ENCODE measurements at regions of chr4 and their contacts with region 1.

Region 1: DNA sequence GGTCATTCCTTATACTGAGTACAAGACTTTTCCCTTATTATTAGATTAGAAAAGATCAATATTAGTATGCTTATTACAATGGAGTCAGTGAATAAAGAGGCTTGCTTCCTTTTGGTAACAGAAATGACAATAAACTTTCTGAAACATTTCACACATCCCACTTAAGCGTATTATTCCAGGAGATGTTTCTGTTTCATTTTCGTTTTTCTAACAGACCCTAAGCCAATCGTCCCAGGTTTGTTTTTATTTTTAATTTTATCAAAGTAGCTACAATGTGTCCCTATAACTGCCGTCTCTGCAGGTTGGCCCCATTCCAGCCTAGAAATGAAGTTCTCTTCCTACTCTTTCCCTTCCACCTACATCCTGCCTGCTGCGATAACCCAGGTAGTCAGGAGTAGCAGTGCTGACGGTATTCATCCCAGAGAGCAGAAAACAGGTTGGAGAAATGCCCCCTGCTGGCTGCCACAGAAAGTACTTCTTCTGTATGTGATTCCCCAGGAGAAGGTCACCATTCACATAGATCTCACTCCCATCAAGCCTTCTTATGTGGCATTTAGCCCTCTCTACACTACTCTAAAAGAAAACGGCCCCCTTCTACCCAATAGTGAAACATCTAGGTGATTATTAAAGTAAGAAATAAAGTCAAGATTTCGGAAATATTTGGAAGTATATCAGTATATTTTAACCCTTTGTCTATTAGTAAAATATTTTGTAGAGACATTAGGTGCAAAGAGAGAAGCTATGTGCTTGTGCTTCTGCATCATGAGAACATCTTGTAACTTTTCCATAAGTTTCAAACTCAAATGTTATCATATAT is 40.4 kb downstream of the ENPEP start:
- DNase-seq: peak; percentile 37
- H3K4me3 ChIP-seq: peak overlapping the region; percentile 54 to 55
- H3K27ac ChIP-seq: no peak overlapping the region
- H3K4me1 ChIP-seq: peaks cover 0 to 2% of the 10 kb centered on the region in 2 experiments; a peak in 2 of 4 replicates
- H3K27me3 ChIP-seq: peaks cover 4% of the 10 kb centered on the region; the same call in 1 of the 2 replicates
- CTCF ChIP-seq: peak; percentile 78
- EP300 ChIP-seq: no peak
- RAD21 ChIP-seq: peak; percentile 63

Region 2: DNA sequence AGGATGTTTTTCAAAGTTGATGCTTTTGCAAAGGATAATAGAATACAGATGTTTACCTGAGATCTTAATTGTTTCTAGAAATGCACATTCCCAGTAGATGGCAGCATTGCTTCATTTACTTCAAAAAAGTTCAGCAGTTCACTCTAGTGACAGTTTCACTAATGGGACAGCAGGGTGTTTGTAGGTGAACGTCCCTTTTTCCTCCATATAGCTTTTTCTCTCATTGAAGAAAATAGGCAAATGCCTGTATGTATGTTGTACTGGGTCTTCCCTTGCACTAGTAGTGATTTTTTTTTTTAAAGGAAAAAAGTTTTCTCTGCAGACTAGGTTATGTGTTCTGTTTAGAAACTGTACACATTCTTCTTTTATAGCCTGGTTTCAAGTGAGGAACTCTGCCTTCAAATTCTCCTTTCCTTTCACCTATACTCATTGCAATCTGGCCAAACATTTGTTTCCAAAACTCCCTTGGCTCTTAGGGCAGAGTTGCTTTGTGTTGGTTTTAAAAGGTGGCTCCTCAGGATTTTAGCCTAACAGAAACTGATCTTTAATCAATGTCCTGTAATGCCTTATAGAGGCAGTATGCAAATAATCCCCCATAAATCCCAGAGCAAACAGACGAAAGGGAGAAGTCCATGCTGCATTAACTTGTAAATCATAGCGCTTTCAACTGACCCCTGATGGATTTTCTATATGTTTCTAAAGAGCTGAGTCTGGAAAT is 517.3 kb before region 1 on chr4:
- CTCF ChIA-PET with region 1: interaction called, 591 read pairs
- POLR2A ChIA-PET with region 1: no interaction called
- DNase-seq: peak; percentile 55
- H3K4me3 ChIP-seq: no peak overlapping the region
- H3K27ac ChIP-seq: no peak overlapping the region
- H3K4me1 ChIP-seq: no peaks in the 10 kb centered on the region; a peak in 1 of 4 replicates
- H3K27me3 ChIP-seq: no peaks in the 10 kb centered on the region; the same call in 1 of the 2 replicates
- CTCF ChIP-seq: peak; percentile 82
- EP300 ChIP-seq: no peak
- RAD21 ChIP-seq: peak; percentile 90

Region 3: GRCh38 chr4:110344162-110344561 is 172.2 kb before region 1 on chr4:
- CTCF ChIA-PET with region 1: interaction called, 11 read pairs
- POLR2A ChIA-PET with region 1: no interaction called
- DNase-seq: peak; percentile 4
- H3K4me3 ChIP-seq: no peak overlapping the region
- H3K27ac ChIP-seq: no peak overlapping the region
- H3K4me1 ChIP-seq: no peaks in the 10 kb centered on the region; a peak in 1 of 4 replicates
- H3K27me3 ChIP-seq: 0 out of 2 replicates have a peak, but pooled peaks cover under 1% of the 10 kb centered on the region
- CTCF ChIP-seq: peak; percentile 41
- EP300 ChIP-seq: no peak
- RAD21 ChIP-seq: peak; percentile 55

Region 4: GRCh38 chr4:110442156-110442703 is 74.1 kb before region 1 on chr4:
- CTCF ChIA-PET with region 1: no interaction called
- POLR2A ChIA-PET with region 1: no interaction called
- DNase-seq: no peak
- H3K4me3 ChIP-seq: no peak overlapping the region
- H3K27ac ChIP-seq: no peak overlapping the region
- H3K4me1 ChIP-seq: no peaks in the 10 kb centered on the region
- H3K27me3 ChIP-seq: no peaks in the 10 kb centered on the region
- CTCF ChIP-seq: no peak
- EP300 ChIP-seq: no peak
- RAD21 ChIP-seq: no peak

Region 5: GRCh38 chr4:110533940-110534339 is 17.6 kb after region 1 on chr4:
- CTCF ChIA-PET with region 1: interaction called, 10 read pairs
- POLR2A ChIA-PET with region 1: no interaction called
- DNase-seq: no peak
- H3K4me3 ChIP-seq: no peak overlapping the region
- H3K27ac ChIP-seq: no peak overlapping the region
- H3K4me1 ChIP-seq: no peaks in the 10 kb centered on the region
- H3K27me3 ChIP-seq: no peaks in the 10 kb centered on the region; the same call in 1 of the 2 replicates
- CTCF ChIP-seq: no peak
- EP300 ChIP-seq: no peak
- RAD21 ChIP-seq: no peak

Measured in SK-N-SH (cell line).